HAP-1 (cell line): ENCODE measurements at regions of chr12 and their contacts with region 1.

Region 1: DNA sequence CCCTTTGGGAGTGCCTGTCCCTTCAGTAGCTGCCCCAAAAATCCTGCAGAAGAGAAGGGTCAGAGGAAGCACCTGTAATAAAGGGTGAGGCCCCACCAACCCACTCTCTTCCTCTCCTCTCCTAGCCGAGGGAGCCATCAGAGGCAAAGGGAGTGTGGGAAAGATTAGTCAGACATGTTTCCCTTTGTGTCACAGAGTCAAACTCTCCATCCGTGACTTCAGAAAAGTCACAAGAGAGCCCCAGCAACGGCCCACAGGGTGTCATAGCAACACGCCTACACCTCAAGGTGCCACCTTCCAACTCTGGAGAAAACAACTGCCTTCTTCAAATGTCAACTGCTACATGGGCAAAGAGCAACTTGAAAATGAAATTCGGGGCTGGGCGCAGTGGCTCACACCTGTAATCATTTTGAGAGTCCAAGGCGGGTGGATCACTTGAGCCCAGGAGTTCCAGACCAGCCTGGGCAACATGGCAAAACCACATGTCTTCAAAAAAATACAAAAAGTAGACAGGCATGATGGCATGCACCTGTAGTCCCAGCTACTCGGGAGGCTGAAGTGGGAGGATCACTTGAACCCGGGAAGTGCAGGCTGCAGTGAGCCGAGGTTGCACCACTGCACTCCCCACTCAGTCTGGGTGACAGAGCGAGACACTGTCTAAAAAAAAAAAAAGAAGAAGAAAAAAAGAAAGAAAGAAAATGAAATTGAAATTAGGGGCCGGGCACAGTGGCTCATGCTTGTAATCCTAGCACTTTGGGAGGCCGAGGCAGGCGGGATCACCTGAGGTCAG is 17.7 kb upstream of the CD27 start:
- DNase-seq: no peak
- H3K4me3 ChIP-seq: no peak overlapping the region
- H3K4me1 ChIP-seq: peaks cover 14% of the 10 kb centered on the region
- H3K27me3 ChIP-seq: no peaks in the 10 kb centered on the region

Region 2: GRCh38 chr12:6461401-6462233 is 34.5 kb after region 1 on chr12:
- in situ Hi-C with region 1: loop called (anchors 5 kb)
- DNase-seq: no peak
- H3K4me3 ChIP-seq: no peak overlapping the region
- H3K4me1 ChIP-seq: no peaks in the 10 kb centered on the region
- H3K27me3 ChIP-seq: no peaks in the 10 kb centered on the region

Region 3: DNA sequence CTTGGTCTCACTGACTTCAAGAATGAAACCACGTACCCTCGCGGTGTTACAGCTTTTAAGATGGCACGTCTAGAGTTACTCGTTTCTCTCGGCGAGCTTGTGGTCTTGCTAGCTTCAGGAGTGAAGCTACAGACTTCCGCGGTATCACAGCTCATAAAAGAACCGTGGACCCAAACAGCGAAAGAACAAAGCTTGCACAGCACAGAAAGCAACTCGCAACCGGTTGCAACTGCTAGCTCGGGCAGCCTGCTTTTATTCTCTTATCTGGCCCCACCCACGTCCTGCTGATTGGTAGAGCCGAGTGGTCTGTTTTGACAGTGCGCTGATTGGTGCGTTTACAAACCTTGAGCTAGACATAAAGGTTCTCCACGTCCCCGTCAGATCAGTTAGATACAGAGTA is 1324.3 kb after region 1 on chr12:
- in situ Hi-C with region 1: no loop called
- DNase-seq: no peak
- H3K4me3 ChIP-seq: no peak overlapping the region
- H3K4me1 ChIP-seq: peaks cover 6% of the 10 kb centered on the region
- H3K27me3 ChIP-seq: no peaks in the 10 kb centered on the region